ENCODE measurements at regions of chr12 and their contacts with region 1.

Region 1: GRCh38 chr12:54865683-54866324 is 11.5 kb downstream of the MUCL1 start:
- DNase-seq: no peak
- H3K4me3 Mint-ChIP-seq: no peak overlapping the region
- H3K27ac Mint-ChIP-seq: no peak overlapping the region
- H3K4me1 Mint-ChIP-seq: peaks cover 13% of the 10 kb centered on the region
- H3K27me3 Mint-ChIP-seq: peaks cover 43% of the 10 kb centered on the region

Region 2: DNA sequence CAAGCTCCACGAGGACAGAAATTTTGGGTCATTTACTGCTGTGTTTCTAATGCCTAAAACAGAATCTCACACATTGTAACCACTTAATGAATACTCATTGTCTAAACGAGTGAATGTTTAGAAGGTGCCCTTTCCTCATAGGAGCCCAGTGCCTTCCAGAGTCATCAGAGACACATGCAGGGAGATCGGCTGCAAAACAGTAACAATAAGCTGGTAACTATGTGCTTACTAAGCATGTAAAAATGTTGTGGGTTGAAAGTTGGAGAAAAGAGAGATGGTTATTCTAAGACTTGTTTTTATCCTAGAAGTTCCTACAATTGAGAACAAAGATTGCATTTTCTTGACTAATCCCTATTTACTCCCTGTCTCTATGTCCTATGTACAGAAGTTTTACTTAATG is 111.4 kb after region 1 on chr12:
- intact Hi-C with region 1: loop called (anchors 5 kb)
- DNase-seq: no peak
- H3K4me3 Mint-ChIP-seq: peak overlapping the region; percentile 92
- H3K27ac Mint-ChIP-seq: peak overlapping the region; percentile 77
- H3K4me1 Mint-ChIP-seq: peaks cover 79% of the 10 kb centered on the region
- H3K27me3 Mint-ChIP-seq: no peaks in the 10 kb centered on the region

Measured in activated T-helper 2 cell treated with anti-CD3 and anti-CD28 coated beads, Interferon-gamma antibody, Interleukin-2, Interleukin-4, amounts not matched to agents 10 μg/mL and 5 μg/mL and 100 μg/mL, durations not matched to agents 14 hours and 24 hours and 36 hours (primary cell).